Heart left ventricle (tissue), 16 donors: ENCODE measurements at regions of chr4 and their contacts with region 1.

Region 1: DNA sequence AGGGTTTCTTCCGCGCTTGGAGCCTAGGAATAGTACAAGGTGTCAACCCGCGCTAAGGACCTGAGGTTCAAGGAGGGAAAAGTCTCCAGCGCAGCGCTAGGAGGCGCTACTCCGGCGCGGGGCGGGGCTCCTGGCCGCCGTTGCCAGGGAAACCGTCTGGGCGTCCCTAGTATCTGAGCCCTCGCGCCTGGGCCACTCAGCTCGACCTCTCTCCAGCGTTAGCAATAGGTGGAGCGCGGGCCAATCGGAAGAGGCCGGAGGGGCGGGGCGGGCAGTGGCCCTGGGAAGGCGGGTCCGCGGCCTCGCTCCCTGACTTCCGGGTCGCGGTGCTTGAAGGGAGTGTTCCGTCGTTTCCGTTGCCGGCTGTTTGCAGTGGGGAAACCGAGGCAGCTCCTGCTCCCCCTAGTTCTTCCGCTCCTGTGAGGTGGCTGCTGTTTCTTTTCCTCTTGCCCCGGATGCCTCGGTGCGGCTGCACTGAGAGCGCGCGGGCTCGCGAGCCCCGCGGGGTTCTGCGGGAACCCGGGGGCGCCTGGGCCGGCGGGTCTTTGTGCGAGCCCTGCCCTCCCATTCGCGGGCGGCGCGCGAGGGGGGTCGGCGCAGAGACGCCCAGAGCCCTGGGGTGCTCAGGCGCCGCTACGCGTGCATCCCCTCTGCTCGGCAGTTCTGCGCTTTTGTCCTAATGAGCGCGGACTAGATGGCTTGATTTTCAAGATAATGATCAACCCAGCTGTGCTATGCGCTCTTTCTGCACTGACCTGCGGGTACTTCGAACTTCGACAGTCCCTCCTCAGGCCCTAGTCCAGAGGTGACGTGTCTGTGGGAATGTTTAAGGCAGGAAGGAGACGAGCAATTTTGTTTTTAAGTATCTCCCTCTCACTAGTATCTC is at the start of gene ELMOD2:
- DNase-seq: peak; percentile 99 to 100 (median 99)
- ATAC-seq: peak; percentile 100
- H3K4me3 ChIP-seq: peak within 1 kb of the TSS; percentile 59 to 99 (median 83)
- H3K27ac ChIP-seq: peak within 1 kb of the TSS; percentile 27 to 92 (median 85)
- H3K4me1 ChIP-seq: peaks cover 0 to 34% (median 13%) of the 10 kb centered on the region in 12 donors
- H3K27me3 ChIP-seq: no peaks in the 10 kb centered on the region
- CTCF ChIP-seq: peak; percentile 86 to 99 (median 96)
- POLR2A ChIP-seq: peak in 1 of 2 donors; percentile 81
- total RNA-seq, gene ELMOD2: 11.5 to 22.3 (median 16.5) TPM

Region 2: DNA sequence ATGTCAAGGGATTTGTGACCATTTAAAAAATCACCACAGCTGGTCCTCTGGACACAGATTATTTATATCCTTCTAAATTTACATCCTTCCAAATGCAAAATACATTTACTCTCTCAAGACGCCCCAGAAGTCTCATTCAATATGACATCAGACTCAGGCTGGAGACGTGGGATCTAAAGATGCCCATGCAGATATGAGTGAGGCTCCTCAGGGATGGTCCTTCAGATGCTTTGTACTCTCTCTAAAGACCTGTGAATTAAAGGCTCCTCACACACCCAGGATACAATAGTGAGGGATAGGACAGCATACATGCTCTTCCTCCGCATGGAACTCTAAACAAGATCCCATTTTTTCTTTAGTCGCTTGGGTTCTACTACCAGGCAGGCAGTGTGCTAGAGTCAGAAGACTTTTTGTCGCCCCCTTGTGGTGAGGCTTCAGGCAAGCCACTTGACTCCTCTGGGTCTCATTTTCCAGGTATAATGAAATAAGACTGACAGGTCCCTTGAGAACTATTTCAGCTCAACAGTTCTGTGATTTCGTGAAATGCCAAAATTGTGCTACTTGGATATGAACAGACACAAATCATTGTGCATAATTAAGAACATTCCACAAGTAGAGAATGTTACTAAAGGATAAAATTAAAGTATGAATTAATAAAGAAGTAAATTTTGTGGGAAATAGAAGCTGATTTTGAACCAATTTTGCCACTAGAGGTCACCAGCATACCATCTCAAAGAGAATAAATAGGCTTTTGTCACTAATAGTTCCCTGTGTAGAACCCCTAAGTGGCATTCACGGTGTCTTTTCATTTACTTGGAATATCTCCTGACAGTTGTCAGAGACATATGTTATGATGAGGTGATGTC is 164.3 kb before region 1 on chr4:
- intact Hi-C with region 1: loop called in 1 of 10 experiments (anchors 10 kb)
- DNase-seq: peak in 4 of 5 donors; percentile 63 to 75 (median 70)
- ATAC-seq: peak in 3 of 4 donors; percentile 76 to 90 (median 79)
- H3K4me3 ChIP-seq: no peak overlapping the region
- H3K27ac ChIP-seq: no peak overlapping the region
- H3K4me1 ChIP-seq: no peaks in the 10 kb centered on the region
- H3K27me3 ChIP-seq: peaks cover 0 to 4% (median 0%) of the 10 kb centered on the region in 9 donors
- CTCF ChIP-seq: peak; percentile 67 to 84 (median 78)
- POLR2A ChIP-seq: no peak

Region 3: GRCh38 chr4:140373328-140374129 is 150.6 kb before region 1 on chr4 and contains the start of gene SCOC:
- intact Hi-C with region 1: loop called in 9 of 10 experiments (anchors 5 to 10 kb)
- DNase-seq: peak; percentile 99 to 100 (median 99)
- ATAC-seq: peak; percentile 98 to 99 (median 99)
- H3K4me3 ChIP-seq: peak within 1 kb of the TSS; percentile 77 to 96 (median 84)
- H3K27ac ChIP-seq: peak within 1 kb of the TSS; percentile 76 to 96 (median 94)
- H3K4me1 ChIP-seq: peaks cover 0 to 52% (median 31%) of the 10 kb centered on the region in 12 donors
- H3K27me3 ChIP-seq: no peaks in the 10 kb centered on the region
- CTCF ChIP-seq: peak in 1 of 12 donors; percentile 9
- POLR2A ChIP-seq: peak in 1 of 2 donors; percentile 74
- total RNA-seq, gene SCOC: 61.0 to 80.9 (median 70.3) TPM

Region 4: DNA sequence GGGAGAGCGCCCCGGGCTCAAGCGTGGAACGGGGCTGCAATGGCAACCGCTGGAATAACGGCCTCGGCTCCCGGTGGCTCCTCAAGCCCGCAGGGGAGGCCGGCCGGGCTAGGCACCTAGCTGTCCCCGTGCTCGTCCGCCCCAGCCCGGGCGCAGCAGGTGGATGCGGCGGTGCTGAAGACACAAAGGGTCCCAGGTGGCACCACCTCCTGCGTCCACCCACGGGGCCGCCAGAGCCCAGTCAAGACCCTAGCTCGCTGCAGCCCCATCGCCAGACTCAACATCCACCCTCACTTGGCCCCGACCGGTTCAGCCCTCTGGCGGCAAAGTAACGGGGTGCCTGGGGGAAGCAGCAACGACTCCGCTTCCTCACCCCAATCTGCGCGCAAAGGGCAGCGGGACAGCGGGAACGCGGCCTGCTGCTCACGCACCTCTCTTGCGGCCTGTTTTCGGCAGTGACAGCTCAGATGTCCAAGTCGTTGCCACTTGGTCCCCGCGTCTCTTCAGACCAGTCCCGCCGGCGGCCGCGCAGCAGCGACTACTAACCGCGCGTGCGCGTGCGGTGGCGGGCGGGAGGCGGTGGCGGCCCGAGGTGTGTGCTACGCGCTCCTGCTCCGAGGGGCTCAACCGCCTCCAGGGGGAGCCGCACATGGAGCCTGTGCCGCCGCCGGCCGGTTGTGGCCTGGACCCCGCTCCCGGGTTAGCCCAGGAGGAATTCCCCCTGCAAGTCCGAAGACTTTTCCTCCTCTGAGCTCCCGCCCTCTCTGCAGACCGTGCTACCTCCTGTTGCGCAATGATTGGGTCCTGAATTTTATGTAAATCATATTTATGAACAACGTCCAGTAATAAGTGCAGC is 96.8 kb before region 1 on chr4 and contains the start of gene CLGN:
- intact Hi-C with region 1: loop called in 3 of 10 experiments (anchors 2 to 5 kb)
- DNase-seq: peak; percentile 73 to 89 (median 81)
- ATAC-seq: peak; percentile 84 to 97 (median 94)
- H3K4me3 ChIP-seq: peak within 1 kb of the TSS; percentile 32 to 80 (median 66)
- H3K27ac ChIP-seq: peak within 1 kb of the TSS; percentile 66 to 91 (median 82)
- H3K4me1 ChIP-seq: peaks cover 0 to 21% (median 0%) of the 10 kb centered on the region in 12 donors
- H3K27me3 ChIP-seq: peaks cover 0 to 16% (median 6%) of the 10 kb centered on the region in 9 donors
- CTCF ChIP-seq: peak; percentile 15 to 73 (median 52)
- POLR2A ChIP-seq: peak in 1 of 2 donors; percentile 39
- total RNA-seq, gene CLGN: 52.6 to 86.4 (median 62.7) TPM

Region 5: DNA sequence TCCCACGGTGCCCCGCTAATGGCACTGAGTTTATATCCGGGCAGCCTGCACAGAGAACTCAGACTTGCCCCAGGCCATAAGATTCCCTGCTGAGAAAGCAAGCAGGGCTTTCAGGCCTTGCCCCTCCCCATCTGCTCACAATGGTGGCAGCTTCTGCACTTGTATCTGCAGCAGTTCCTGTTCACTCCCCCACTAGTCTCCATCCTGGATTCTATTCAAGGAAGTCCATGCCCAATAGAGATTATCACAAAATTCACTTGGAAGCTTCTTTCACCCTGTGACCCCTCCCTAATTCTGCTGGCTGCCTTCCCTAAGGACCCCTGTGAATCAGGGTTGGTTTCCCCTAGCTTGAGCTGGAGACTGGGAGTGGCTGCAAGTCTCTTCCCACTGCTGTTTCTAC is 79.2 kb after region 1 on chr4:
- intact Hi-C with region 1: loop called in 4 of 10 experiments (anchors 5 to 10 kb)
- DNase-seq: peak in 4 of 5 donors; percentile 36 to 62 (median 50)
- ATAC-seq: peak; percentile 56 to 87 (median 76)
- H3K4me3 ChIP-seq: no peak overlapping the region
- H3K27ac ChIP-seq: peak overlapping the region in 10 of 12 donors; percentile 35 to 82 (median 72)
- H3K4me1 ChIP-seq: peaks cover 4 to 26% (median 10%) of the 10 kb centered on the region in 12 donors
- H3K27me3 ChIP-seq: no peaks in the 10 kb centered on the region
- CTCF ChIP-seq: no peak
- POLR2A ChIP-seq: no peak

Region 6: GRCh38 chr4:140609548-140610425 is 85.7 kb after region 1 on chr4:
- intact Hi-C with region 1: loop called in 5 of 10 experiments (anchors 2 to 10 kb)
- DNase-seq: peak in 4 of 5 donors; percentile 28 to 57 (median 42)
- ATAC-seq: peak; percentile 40 to 88 (median 82)
- H3K4me3 ChIP-seq: no peak overlapping the region
- H3K27ac ChIP-seq: peak overlapping the region in 10 of 12 donors; percentile 7 to 50 (median 33)
- H3K4me1 ChIP-seq: peaks cover 0 to 15% (median 0%) of the 10 kb centered on the region in 12 donors
- H3K27me3 ChIP-seq: no peaks in the 10 kb centered on the region
- CTCF ChIP-seq: peak; percentile 34 to 74 (median 64)
- POLR2A ChIP-seq: no peak

Region 7: DNA sequence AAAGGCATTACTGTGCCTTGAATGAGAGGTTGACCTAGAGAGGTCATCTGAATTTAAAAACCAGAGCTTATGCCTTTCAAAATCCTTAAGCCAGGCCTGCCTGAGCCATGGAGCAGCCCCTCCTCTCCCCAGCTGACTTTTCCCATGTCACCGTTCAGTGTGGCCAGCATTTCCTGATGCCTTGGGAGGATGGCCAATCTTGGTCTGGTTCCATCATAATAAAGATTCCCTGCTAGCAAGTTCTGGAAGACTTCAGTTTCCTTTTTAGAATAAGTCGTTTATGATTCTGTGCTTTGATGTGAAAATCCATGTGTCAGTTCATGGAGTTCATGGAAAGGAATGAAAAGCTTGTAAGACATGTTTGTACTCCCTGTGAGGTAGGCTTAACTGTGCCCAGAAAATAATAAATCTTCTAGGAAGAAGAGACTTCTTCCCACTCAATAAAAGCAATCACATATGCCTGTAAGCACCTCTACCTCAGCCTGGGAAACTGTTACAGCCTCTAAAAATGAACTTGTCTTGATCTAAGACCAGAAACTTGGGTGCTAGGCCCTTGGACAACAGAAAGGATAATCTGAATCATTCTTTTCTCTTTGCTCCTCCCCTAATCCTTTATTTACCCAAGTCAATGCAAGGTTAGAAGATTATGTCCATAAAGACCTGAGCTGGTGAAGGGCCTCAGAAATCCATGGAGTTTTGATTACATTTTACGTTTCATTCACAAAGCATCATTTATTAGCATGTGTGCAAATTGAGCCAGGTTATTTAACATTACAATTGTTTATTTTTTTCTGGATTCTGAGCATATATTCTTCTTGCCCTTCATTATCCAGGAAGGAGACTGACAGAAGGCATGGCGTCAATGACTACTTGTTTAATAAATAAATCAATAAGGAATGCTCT is 316.0 kb after region 1 on chr4:
- intact Hi-C with region 1: loop called in 1 of 10 experiments (anchors 10 kb)
- DNase-seq: peak in 1 of 5 donors; percentile 25
- ATAC-seq: peak in 1 of 4 donors; percentile 44
- H3K4me3 ChIP-seq: no peak overlapping the region
- H3K27ac ChIP-seq: peak overlapping the region in 4 of 12 donors; percentile 1 to 48 (median 24)
- H3K4me1 ChIP-seq: peaks cover 0 to 14% (median 4%) of the 10 kb centered on the region in 12 donors
- H3K27me3 ChIP-seq: no peaks in the 10 kb centered on the region
- CTCF ChIP-seq: no peak
- POLR2A ChIP-seq: no peak